Heart right ventricle (tissue), 16 donors: ENCODE measurements at regions of chr17 and their contacts with region 1.

Region 1: GRCh38 chr17:35981908-35982330 is 622 bp upstream of the CCL16 start:
- DNase-seq: no peak
- ATAC-seq: no peak
- H3K4me3 ChIP-seq: no peak overlapping the region
- H3K27ac ChIP-seq: no peak overlapping the region
- H3K4me1 ChIP-seq: peaks cover 0 to 19% (median 5%) of the 10 kb centered on the region in 9 donors
- H3K27me3 ChIP-seq: peaks cover 0 to 3% (median 0%) of the 10 kb centered on the region in 7 donors
- CTCF ChIP-seq: peak in 1 of 9 donors; percentile 14

Region 2: DNA sequence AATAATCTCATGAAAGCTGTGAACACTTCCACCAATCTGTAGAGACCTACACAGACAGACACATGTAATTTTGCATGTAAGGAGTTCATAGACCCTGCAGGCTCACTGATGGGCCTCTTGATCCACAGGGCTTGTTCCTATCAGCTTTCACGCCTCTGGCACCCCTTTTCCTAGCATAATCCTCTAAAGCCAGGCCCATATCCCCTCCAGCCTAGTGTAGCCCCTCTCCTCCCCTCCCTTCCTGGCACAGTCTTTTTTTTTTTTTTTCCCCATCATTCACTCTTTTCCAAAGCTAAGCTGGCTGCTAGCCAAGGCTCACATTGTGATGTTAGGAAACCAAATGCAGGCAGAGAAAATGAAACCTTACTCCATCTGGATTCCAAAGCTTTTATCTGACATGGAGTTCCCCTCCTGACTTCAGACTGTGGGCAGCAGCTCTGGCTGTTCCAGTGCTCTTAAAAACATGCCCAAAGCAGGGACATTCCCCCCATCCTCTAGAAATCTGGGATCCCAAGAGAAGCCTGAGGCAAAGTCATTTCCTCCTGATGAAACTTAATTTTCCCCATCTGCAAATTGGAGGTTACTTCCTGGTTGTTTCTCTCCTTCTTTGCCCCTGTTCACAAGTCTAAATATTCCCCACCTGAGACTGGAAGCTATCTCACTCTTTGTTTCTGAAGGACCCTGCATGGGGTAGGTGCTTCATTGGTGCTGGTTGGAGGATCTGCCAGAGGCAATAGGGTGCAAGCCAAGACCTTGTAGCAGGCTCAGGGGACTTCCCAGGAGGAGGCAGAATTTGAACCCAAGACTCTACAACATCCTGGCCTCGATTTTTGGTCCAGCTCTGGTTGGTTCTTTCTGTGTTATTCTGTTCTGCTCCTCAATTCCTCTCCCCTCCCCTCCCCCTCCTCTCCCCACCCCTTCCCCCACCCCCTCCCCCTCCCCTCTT is 91.8 kb before region 1 on chr17:
- intact Hi-C with region 1: no loop called
- DNase-seq: no peak
- ATAC-seq: peak in 1 of 8 donors; percentile 35
- H3K4me3 ChIP-seq: no peak overlapping the region
- H3K27ac ChIP-seq: peak overlapping the region in 1 of 10 donors; percentile 79
- H3K4me1 ChIP-seq: peaks cover 0 to 39% (median 3%) of the 10 kb centered on the region in 9 donors
- H3K27me3 ChIP-seq: no peaks in the 10 kb centered on the region
- CTCF ChIP-seq: no peak

Region 3: GRCh38 chr17:35930211-35931065 is 51.5 kb before region 1 on chr17 and contains the start of gene RDM1:
- intact Hi-C with region 1: loop called in 1 of 10 experiments (anchors 10 kb)
- DNase-seq: peak; percentile 49 to 65
- ATAC-seq: peak; percentile 57 to 94 (median 85)
- H3K4me3 ChIP-seq: peak within 1 kb of the TSS in 9 of 10 donors; percentile 12 to 53 (median 42)
- H3K27ac ChIP-seq: no peak within 1 kb of the TSS
- H3K4me1 ChIP-seq: peaks cover 0 to 33% (median 12%) of the 10 kb centered on the region in 9 donors
- H3K27me3 ChIP-seq: peaks cover 0 to 22% (median 6%) of the 10 kb centered on the region in 7 donors
- CTCF ChIP-seq: no peak
- total RNA-seq, gene RDM1: 0.46 to 1.3 TPM in 2 of 10 donors, not detected in the others

Region 4: DNA sequence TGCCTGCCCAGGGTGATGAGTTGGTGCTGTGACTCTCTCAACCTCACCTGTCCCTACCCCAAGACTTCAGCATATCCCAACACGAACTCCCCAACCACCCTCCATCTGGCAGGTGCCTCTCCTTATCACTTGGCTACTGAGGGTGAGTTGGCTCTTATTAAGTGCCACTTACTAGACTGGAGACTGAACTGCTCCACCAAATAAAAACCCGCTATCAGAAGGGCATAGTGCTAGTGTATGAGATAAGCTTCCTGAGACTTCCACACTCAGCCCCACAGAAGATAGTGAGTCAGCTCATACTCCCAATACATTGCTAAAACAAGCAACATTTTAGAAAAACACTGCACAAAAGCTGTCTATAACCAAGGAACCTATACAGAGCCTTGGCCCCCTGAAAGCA is 66.1 kb after region 1 on chr17:
- intact Hi-C with region 1: no loop called
- DNase-seq: no peak
- ATAC-seq: no peak
- H3K4me3 ChIP-seq: no peak overlapping the region
- H3K27ac ChIP-seq: no peak overlapping the region
- H3K4me1 ChIP-seq: no peaks in the 10 kb centered on the region
- H3K27me3 ChIP-seq: peaks cover 0 to 9% (median 0%) of the 10 kb centered on the region in 7 donors
- CTCF ChIP-seq: no peak

Region 5: GRCh38 chr17:36072431-36073121 is 90.7 kb after region 1 on chr17:
- intact Hi-C with region 1: loop called in 3 of 10 experiments (anchors 5 to 10 kb)
- DNase-seq: peak; percentile 45 to 59
- ATAC-seq: peak in 5 of 8 donors; percentile 31 to 64 (median 56)
- H3K4me3 ChIP-seq: no peak overlapping the region
- H3K27ac ChIP-seq: peak overlapping the region in 1 of 10 donors; percentile 42
- H3K4me1 ChIP-seq: peaks cover 0 to 13% (median 0%) of the 10 kb centered on the region in 9 donors
- H3K27me3 ChIP-seq: peaks cover 0 to 8% (median 0%) of the 10 kb centered on the region in 7 donors
- CTCF ChIP-seq: peak; percentile 27 to 80 (median 63)

Region 6: DNA sequence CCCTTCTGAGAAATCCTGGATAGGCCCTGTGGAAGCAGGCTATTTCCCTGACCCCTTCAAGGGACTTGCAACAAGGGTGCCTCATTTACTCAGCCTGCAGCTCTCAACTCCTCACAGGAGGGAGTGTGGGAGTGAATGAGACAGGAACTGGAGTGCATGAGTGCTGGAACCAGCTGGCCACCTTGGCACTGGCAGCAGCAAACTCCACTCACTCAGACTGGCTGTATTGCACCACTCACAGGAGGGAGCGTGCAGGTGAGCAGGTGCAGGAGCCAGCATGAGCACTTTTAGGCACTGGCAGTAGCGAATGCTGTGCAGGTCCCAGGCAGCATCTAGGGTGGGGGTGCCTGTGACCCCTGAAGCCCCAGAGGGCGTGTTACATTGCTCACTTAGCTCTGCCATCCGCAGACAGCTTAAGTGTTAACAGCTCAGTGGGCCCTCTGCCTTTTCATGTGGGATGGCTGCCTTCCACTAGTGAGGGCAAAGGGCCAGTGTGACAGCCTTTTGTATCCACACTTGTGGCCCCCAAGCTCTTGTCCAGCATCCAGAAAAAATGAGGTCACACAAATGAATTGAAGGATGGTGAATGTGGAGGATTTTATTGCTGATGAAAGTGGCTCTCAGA is 493.5 kb after region 1 on chr17:
- intact Hi-C with region 1: loop called in 1 of 10 experiments (anchors 10 kb)
- DNase-seq: no peak
- ATAC-seq: no peak
- H3K4me3 ChIP-seq: no peak overlapping the region
- H3K27ac ChIP-seq: no peak overlapping the region
- H3K4me1 ChIP-seq: no peaks in the 10 kb centered on the region
- H3K27me3 ChIP-seq: peaks cover 0 to 48% (median 23%) of the 10 kb centered on the region in 7 donors
- CTCF ChIP-seq: no peak